B cell (primary cell): ENCODE measurements at regions of chrX and their contacts with region 1.

Region 1: GRCh38 chrX:41116948-41117347 is 31.7 kb downstream of the USP9X start:
- DNase-seq: peak; percentile 50
- ATAC-seq: peak; percentile 66
- H3K4me3 ChIP-seq: no peak overlapping the region
- H3K4me3 Mint-ChIP-seq: peak overlapping the region; percentile 55
- H3K27ac ChIP-seq: peak overlapping the region; percentile 16 to 53
- H3K27ac Mint-ChIP-seq: peak overlapping the region; percentile 61
- H3K4me1 ChIP-seq: peaks cover 43 to 51% of the 10 kb centered on the region in 2 donors
- H3K4me1 Mint-ChIP-seq: peaks cover 66% of the 10 kb centered on the region
- H3K27me3 ChIP-seq: no peaks in the 10 kb centered on the region
- H3K27me3 Mint-ChIP-seq: no peaks in the 10 kb centered on the region
- CTCF ChIP-seq: no peak

Region 2: DNA sequence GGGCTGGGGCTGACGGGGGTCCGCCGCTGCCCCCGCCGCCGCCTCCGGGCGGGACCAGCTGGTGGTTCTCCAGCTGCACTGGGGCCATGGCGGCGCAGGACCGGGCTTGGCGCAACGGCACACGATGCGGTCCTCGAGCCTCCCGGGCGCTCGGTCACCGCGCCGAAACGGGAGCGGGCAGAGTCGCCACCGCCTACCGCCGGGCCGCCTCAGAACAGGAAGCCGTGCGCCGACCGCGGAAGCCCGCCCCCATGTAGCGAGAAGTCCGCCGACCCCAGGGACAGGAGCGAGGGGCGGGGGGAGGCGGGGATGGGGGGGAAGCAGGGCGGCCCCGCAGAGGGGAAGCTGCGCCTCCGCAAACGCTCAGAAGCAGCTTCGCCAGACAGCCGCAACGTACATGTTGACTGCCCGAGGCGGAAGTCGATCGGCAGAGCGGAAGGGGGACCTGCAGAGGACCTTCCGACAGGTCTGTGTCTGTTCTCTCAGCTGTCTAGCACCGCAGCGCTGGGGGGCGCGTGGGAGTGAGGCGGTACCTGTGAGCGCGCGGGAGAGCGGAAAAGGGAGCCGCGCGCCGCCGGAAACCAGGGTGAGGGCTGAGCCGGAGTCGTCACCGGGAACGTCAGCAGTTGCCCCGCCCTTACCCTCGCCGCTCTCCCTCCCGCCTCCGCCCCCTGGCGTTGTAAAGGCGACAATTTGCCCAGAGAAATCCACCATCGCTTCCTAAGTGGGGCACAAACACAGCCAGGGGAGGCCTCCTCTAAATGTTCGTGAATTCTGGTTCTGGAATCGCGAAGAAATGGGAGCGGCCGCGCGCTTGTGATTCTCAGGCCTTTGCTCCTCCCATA is 381.4 kb before region 1 on chrX and contains the start of gene MED14:
- CTCF ChIA-PET with region 1: no interaction called
- POLR2A ChIA-PET with region 1: no interaction called
- intact Hi-C with region 1: loop called (anchors 10 kb)
- DNase-seq: peak; percentile 94
- ATAC-seq: peak; percentile 84
- H3K4me3 ChIP-seq: peak within 1 kb of the TSS; percentile 64 to 93 (median 82)
- H3K4me3 Mint-ChIP-seq: peak within 1 kb of the TSS; percentile 91
- H3K27ac ChIP-seq: peak within 1 kb of the TSS; percentile 91 to 98
- H3K27ac Mint-ChIP-seq: peak within 1 kb of the TSS; percentile 98
- H3K4me1 ChIP-seq: peaks cover 25 to 31% of the 10 kb centered on the region in 2 donors
- H3K4me1 Mint-ChIP-seq: peaks cover 34% of the 10 kb centered on the region
- H3K27me3 ChIP-seq: peaks cover 0 to 2% (median 0%) of the 10 kb centered on the region in 4 experiments
- H3K27me3 Mint-ChIP-seq: no peaks in the 10 kb centered on the region
- CTCF ChIP-seq: peak; percentile 56
- total RNA-seq, gene MED14: 63.5 and 67.1 TPM in 2 replicates

Region 3: DNA sequence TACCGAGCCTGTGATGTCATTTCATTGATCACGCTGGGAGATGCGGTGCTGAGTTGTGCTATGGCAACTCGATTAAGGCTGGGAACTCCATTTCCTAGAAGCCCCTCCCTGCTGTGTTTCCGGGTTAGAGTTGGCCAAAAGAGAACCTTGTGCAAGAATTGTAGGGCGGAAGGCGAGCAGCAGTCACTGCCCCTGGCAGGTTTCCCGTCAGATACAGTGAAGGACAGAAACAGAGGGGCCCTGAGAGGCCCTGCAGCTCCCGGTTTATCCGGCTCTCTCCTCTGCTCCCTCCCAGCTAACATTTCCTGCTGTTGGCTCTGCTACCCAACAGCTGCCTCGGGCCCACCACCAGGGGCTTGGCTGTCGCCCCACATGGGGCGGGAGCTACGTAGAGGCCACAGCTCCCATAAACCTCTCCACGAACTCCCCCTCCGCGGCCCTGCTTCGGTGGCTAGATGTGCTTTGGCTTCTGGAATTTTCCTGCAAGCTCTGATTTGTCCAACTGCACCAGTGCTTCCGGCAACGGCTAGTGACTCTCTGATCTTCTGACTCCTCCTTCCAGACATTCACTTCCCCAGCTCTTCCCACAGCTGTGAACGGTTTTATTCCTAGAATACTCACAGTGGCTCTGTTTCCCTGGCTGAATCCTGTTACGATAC is 106.6 kb before region 1 on chrX:
- CTCF ChIA-PET with region 1: interaction called, 10 read pairs
- POLR2A ChIA-PET with region 1: interaction called, 3 read pairs
- intact Hi-C with region 1: loop called (anchors 10 kb)
- DNase-seq: peak; percentile 65
- ATAC-seq: peak; percentile 67
- H3K4me3 ChIP-seq: peak overlapping the region; percentile 13 to 53 (median 31)
- H3K4me3 Mint-ChIP-seq: peak overlapping the region; percentile 82
- H3K27ac ChIP-seq: peak overlapping the region in 1 of 2 donors; percentile 16
- H3K27ac Mint-ChIP-seq: peak overlapping the region; percentile 73
- H3K4me1 ChIP-seq: peaks cover 7 to 11% of the 10 kb centered on the region in 2 donors
- H3K4me1 Mint-ChIP-seq: peaks cover 16% of the 10 kb centered on the region
- H3K27me3 ChIP-seq: peaks cover 0 to 7% (median 3%) of the 10 kb centered on the region in 4 experiments
- H3K27me3 Mint-ChIP-seq: peaks cover 16% of the 10 kb centered on the region
- CTCF ChIP-seq: no peak

Region 4: GRCh38 chrX:41084044-41084892 is 32.7 kb before region 1 on chrX:
- CTCF ChIA-PET with region 1: interaction called, 21 read pairs
- POLR2A ChIA-PET with region 1: interaction called, 8 read pairs
- intact Hi-C with region 1: loop called (anchors 2 kb)
- DNase-seq: peak; percentile 96
- ATAC-seq: peak; percentile 63
- H3K4me3 ChIP-seq: peak overlapping the region; percentile 46 to 93 (median 75)
- H3K4me3 Mint-ChIP-seq: peak overlapping the region; percentile 94
- H3K27ac ChIP-seq: peak overlapping the region; percentile 100
- H3K27ac Mint-ChIP-seq: peak overlapping the region; percentile 100
- H3K4me1 ChIP-seq: peaks cover 25 to 33% of the 10 kb centered on the region in 2 donors
- H3K4me1 Mint-ChIP-seq: peaks cover 30% of the 10 kb centered on the region
- H3K27me3 ChIP-seq: no peaks in the 10 kb centered on the region
- H3K27me3 Mint-ChIP-seq: no peaks in the 10 kb centered on the region
- CTCF ChIP-seq: no peak

Region 5: GRCh38 chrX:41167888-41168287 is 50.9 kb after region 1 on chrX:
- CTCF ChIA-PET with region 1: no interaction called
- POLR2A ChIA-PET with region 1: no interaction called
- intact Hi-C with region 1: no loop called
- DNase-seq: no peak
- ATAC-seq: no peak
- H3K4me3 ChIP-seq: no peak overlapping the region
- H3K4me3 Mint-ChIP-seq: no peak overlapping the region
- H3K27ac ChIP-seq: no peak overlapping the region
- H3K27ac Mint-ChIP-seq: no peak overlapping the region
- H3K4me1 ChIP-seq: no peaks in the 10 kb centered on the region
- H3K4me1 Mint-ChIP-seq: no peaks in the 10 kb centered on the region
- H3K27me3 ChIP-seq: no peaks in the 10 kb centered on the region
- H3K27me3 Mint-ChIP-seq: no peaks in the 10 kb centered on the region
- CTCF ChIP-seq: no peak